Activated B cell treated with CpG ODN at 0.5 μM for 24 hours (primary cell): ENCODE measurements at regions of chr17 and their contacts with region 1.

Region 1: GRCh38 chr17:29760761-29761696 is 138.3 kb upstream of the CORO6 start:
- DNase-seq: peak; percentile 95
- ATAC-seq: peak; percentile 86
- H3K4me3 Mint-ChIP-seq: peak overlapping the region; percentile 93
- H3K27ac Mint-ChIP-seq: peak overlapping the region; percentile 91
- H3K4me1 Mint-ChIP-seq: peaks cover 43% of the 10 kb centered on the region
- H3K27me3 Mint-ChIP-seq: no peaks in the 10 kb centered on the region
- CTCF ChIP-seq: no peak

Region 2: GRCh38 chr17:29589524-29590410 is 171.3 kb before region 1 on chr17 and contains the start of gene GIT1:
- CTCF ChIA-PET with region 1: no interaction called
- POLR2A ChIA-PET with region 1: interaction called, 3 read pairs
- intact Hi-C with region 1: loop called (anchors 2 kb)
- DNase-seq: peak; percentile 88
- ATAC-seq: peak; percentile 83
- H3K4me3 Mint-ChIP-seq: peak within 1 kb of the TSS; percentile 87
- H3K27ac Mint-ChIP-seq: peak within 1 kb of the TSS; percentile 83
- H3K4me1 Mint-ChIP-seq: peaks cover 73% of the 10 kb centered on the region
- H3K27me3 Mint-ChIP-seq: no peaks in the 10 kb centered on the region
- CTCF ChIP-seq: no peak
- total RNA-seq, gene GIT1: 41.7 and 45.3 TPM in 2 replicates

Region 3: GRCh38 chr17:29682054-29682453 is 79.0 kb before region 1 on chr17:
- CTCF ChIA-PET with region 1: interaction called, 4 read pairs
- POLR2A ChIA-PET with region 1: interaction called, 33 read pairs
- intact Hi-C with region 1: loop called (anchors 1 kb)
- DNase-seq: no peak
- ATAC-seq: peak; percentile 93
- H3K4me3 Mint-ChIP-seq: peak overlapping the region; percentile 21
- H3K27ac Mint-ChIP-seq: peak overlapping the region; percentile 81
- H3K4me1 Mint-ChIP-seq: peaks cover 27% of the 10 kb centered on the region
- H3K27me3 Mint-ChIP-seq: no peaks in the 10 kb centered on the region
- CTCF ChIP-seq: no peak

Region 4: GRCh38 chr17:29705386-29705785 is 55.6 kb before region 1 on chr17:
- CTCF ChIA-PET with region 1: interaction called, 3 read pairs
- POLR2A ChIA-PET with region 1: interaction called, 74 read pairs
- intact Hi-C with region 1: loop called (anchors 1 kb)
- DNase-seq: no peak
- ATAC-seq: no peak
- H3K4me3 Mint-ChIP-seq: peak overlapping the region; percentile 57
- H3K27ac Mint-ChIP-seq: peak overlapping the region; percentile 98
- H3K4me1 Mint-ChIP-seq: peaks cover 70% of the 10 kb centered on the region
- H3K27me3 Mint-ChIP-seq: no peaks in the 10 kb centered on the region
- CTCF ChIP-seq: no peak

Region 5: GRCh38 chr17:29732613-29733012 is 28.4 kb before region 1 on chr17:
- CTCF ChIA-PET with region 1: no interaction called
- POLR2A ChIA-PET with region 1: interaction called, 14 read pairs
- intact Hi-C with region 1: no loop called
- DNase-seq: no peak
- ATAC-seq: no peak
- H3K4me3 Mint-ChIP-seq: no peak overlapping the region
- H3K27ac Mint-ChIP-seq: peak overlapping the region; percentile 59
- H3K4me1 Mint-ChIP-seq: peaks cover 61% of the 10 kb centered on the region
- H3K27me3 Mint-ChIP-seq: no peaks in the 10 kb centered on the region
- CTCF ChIP-seq: no peak

Region 6: GRCh38 chr17:29771551-29771950 is 10.5 kb after region 1 on chr17:
- CTCF ChIA-PET with region 1: interaction called, 5 read pairs
- POLR2A ChIA-PET with region 1: interaction called, 13 read pairs
- intact Hi-C with region 1: loop called (anchors 1 kb)
- DNase-seq: no peak
- ATAC-seq: no peak
- H3K4me3 Mint-ChIP-seq: no peak overlapping the region
- H3K27ac Mint-ChIP-seq: peak overlapping the region; percentile 90
- H3K4me1 Mint-ChIP-seq: peaks cover 18% of the 10 kb centered on the region
- H3K27me3 Mint-ChIP-seq: no peaks in the 10 kb centered on the region
- CTCF ChIP-seq: no peak

Region 7: GRCh38 chr17:30005709-30006320 is 244.8 kb after region 1 on chr17:
- CTCF ChIA-PET with region 1: no interaction called
- POLR2A ChIA-PET with region 1: interaction called, 12 read pairs
- intact Hi-C with region 1: no loop called
- DNase-seq: no peak
- ATAC-seq: no peak
- H3K4me3 Mint-ChIP-seq: no peak overlapping the region
- H3K27ac Mint-ChIP-seq: no peak overlapping the region
- H3K4me1 Mint-ChIP-seq: no peaks in the 10 kb centered on the region
- H3K27me3 Mint-ChIP-seq: no peaks in the 10 kb centered on the region
- CTCF ChIP-seq: no peak